ENCODE measurements at regions of chr2 and their contacts with region 1.

Region 1: DNA sequence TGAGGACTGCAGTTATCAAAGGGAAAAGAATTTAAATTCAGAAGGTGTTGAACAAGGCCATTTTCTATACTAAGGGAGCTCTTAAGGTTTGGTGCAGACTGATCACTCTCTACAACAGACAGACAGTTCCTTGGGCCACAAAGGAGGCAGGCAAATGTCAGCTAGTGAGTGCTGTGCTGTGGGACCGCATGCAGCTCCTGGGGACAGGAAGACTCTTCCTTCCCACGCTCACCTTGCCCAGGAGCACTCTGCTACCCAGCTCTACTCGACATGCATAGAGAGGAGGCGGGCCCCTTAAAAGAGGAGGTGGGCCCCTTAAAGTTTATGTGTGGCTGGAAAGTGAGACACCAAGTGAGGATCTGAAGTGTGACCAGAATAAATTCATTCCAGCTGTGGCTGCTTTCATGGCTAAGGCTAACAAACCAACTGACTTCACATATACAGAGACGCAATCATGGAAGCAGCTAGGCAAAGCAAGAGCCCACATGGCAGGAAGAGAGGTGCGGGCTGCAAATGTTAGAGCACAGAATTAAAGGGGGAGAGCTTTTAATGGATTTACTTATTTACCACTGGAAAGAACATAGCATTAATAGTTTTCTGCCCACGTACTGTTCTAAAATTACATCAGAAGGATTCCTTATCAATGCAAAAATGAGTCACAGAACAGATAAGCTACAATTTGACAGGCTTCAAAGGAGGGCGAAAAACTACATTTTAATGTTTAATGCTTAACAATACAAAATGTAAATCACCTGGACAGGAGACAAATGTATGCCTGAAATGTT is 101.4 kb upstream of the RNU4ATAC start:
- DNase-seq: peak; percentile 51
- ATAC-seq: peak; percentile 57
- H3K4me3 ChIP-seq: no peak overlapping the region
- H3K27ac ChIP-seq: no peak overlapping the region
- H3K4me1 ChIP-seq: peaks cover 6% of the 10 kb centered on the region; the same call in 1 of the 2 replicates
- H3K27me3 ChIP-seq: no peaks in the 10 kb centered on the region
- CTCF ChIP-seq: no peak
- POLR2A ChIP-seq: no peak
- RAD21 ChIP-seq: no peak

Region 2: DNA sequence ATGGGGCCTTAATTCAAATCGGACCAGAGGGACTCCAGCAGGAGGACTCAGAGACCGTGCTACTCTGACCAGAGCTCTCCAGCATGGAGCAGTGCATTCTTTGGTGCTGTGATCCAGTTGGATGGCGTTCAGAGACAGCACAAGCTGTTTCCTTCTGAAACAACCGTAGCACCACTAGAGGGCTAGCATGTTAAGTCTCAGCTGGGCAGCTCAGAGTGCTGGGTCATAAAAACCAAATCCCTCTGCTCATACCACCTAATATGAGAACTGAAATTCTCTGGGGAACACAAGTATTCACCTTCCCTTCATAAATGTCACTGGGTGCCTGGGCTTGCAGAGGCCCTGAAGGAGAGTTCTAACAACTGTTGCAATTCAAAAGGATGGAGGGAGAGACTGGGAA is 46.6 kb before region 1 on chr2:
- CTCF ChIA-PET with region 1: no interaction called
- POLR2A ChIA-PET with region 1: no interaction called
- dilution Hi-C with region 1: no loop called
- in situ Hi-C with region 1: no loop called
- intact Hi-C with region 1: no loop called
- DNase-seq: no peak
- ATAC-seq: no peak
- H3K4me3 ChIP-seq: no peak overlapping the region
- H3K27ac ChIP-seq: no peak overlapping the region
- H3K4me1 ChIP-seq: peaks cover 10% of the 10 kb centered on the region
- H3K27me3 ChIP-seq: no peaks in the 10 kb centered on the region
- CTCF ChIP-seq: no peak
- POLR2A ChIP-seq: no peak
- RAD21 ChIP-seq: no peak

Region 3: GRCh38 chr2:121451398-121451797 is 22.1 kb after region 1 on chr2:
- CTCF ChIA-PET with region 1: interaction called, 10 read pairs
- POLR2A ChIA-PET with region 1: no interaction called
- dilution Hi-C with region 1: no loop called
- in situ Hi-C with region 1: no loop called
- intact Hi-C with region 1: no loop called
- DNase-seq: peak; percentile 91
- ATAC-seq: peak; percentile 92
- H3K4me3 ChIP-seq: no peak overlapping the region
- H3K27ac ChIP-seq: no peak overlapping the region
- H3K4me1 ChIP-seq: peaks cover 11% of the 10 kb centered on the region
- H3K27me3 ChIP-seq: no peaks in the 10 kb centered on the region
- CTCF ChIP-seq: no peak
- POLR2A ChIP-seq: no peak
- RAD21 ChIP-seq: no peak

Region 4: DNA sequence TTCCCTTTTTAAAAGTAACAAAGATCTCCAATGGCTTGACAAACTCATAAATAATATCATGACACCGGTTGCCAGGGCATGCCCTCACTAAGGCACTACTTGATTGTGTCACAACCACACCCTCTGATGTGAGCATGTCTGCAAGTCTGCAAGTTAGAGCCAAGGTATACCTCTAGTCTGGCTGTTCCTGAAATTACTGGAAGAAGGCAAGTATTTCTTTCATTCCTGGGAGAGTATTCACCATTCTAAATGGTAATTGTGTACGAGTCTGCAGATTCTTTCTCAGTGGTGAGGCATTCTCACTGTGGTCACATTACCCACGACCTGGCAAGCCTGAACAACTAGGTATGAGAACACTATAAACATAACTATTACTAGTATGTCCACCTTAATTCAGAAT is 75.7 kb after region 1 on chr2:
- CTCF ChIA-PET with region 1: no interaction called
- POLR2A ChIA-PET with region 1: no interaction called
- dilution Hi-C with region 1: no loop called
- in situ Hi-C with region 1: no loop called
- intact Hi-C with region 1: loop called (anchors 5 kb)
- DNase-seq: peak; percentile 87
- ATAC-seq: peak; percentile 61
- H3K4me3 ChIP-seq: no peak overlapping the region
- H3K27ac ChIP-seq: no peak overlapping the region
- H3K4me1 ChIP-seq: peaks cover 17% of the 10 kb centered on the region
- H3K27me3 ChIP-seq: no peaks in the 10 kb centered on the region
- CTCF ChIP-seq: no peak
- POLR2A ChIP-seq: no peak
- RAD21 ChIP-seq: no peak